Tibial artery (tissue), 4 donors: ENCODE measurements at regions of chr16 and their contacts with region 1.

Region 1: DNA sequence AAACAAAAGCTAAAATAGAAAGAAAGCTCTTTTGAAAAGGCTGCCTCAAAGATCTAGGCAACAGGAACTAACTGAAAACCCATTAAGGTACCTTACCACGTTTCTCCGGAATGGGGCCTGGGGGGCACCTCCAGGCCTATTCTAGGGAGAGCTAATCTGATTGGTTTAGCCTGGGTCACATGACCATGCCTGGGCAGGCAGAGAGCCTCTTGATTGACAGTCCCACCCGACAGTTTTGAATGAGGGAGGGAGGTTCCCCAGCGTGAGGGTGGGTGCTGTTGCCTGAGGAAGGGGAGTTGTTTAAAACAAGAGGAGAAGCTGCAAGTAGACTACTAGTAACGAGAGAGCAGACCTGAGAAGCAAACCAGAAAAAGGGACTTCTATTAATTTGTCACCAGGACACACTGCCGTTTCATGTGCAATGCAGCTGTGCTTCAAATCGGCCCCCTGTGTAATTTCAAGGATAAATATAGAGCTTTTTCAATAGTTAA is 143.4 kb upstream of the HS3ST2 start:
- DNase-seq: peak in 1 of 2 donors; percentile 56
- H3K4me3 ChIP-seq: no peak overlapping the region
- H3K27ac ChIP-seq: no peak overlapping the region
- H3K4me1 ChIP-seq: peaks cover 0 to 14% (median 0%) of the 10 kb centered on the region in 4 donors
- H3K27me3 ChIP-seq: peaks cover 0 to 3% of the 10 kb centered on the region in 2 donors
- CTCF ChIP-seq: no peak

Region 2: GRCh38 chr16:20900299-20901067 is 1770.1 kb before region 1 on chr16 and contains the starts of genes DCUN1D3 and LYRM1:
- intact Hi-C with region 1: loop called (anchors 10 kb)
- DNase-seq: peak; percentile 99
- H3K4me3 ChIP-seq: peak within 1 kb of the TSS; percentile 63 to 78
- H3K27ac ChIP-seq: peak within 1 kb of the TSS; percentile 96 to 98
- H3K4me1 ChIP-seq: peaks cover 0 to 79% (median 62%) of the 10 kb centered on the region in 4 donors
- H3K27me3 ChIP-seq: no peaks in the 10 kb centered on the region
- CTCF ChIP-seq: peak in 1 of 2 experiments; percentile 4

Region 3: GRCh38 chr16:21158208-21159110 is 1512.1 kb before region 1 on chr16 and contains the start of gene LDAF1:
- intact Hi-C with region 1: loop called (anchors 10 kb)
- DNase-seq: peak; percentile 88 to 94
- H3K4me3 ChIP-seq: peak within 1 kb of the TSS; percentile 75 to 91
- H3K27ac ChIP-seq: peak within 1 kb of the TSS; percentile 86 to 92
- H3K4me1 ChIP-seq: peaks cover 0 to 54% (median 40%) of the 10 kb centered on the region in 4 donors
- H3K27me3 ChIP-seq: no peaks in the 10 kb centered on the region
- CTCF ChIP-seq: no peak

Region 4: GRCh38 chr16:23060458-23061320 is 390.1 kb after region 1 on chr16:
- intact Hi-C with region 1: loop called (anchors 10 kb)
- DNase-seq: peak; percentile 79 to 80
- H3K4me3 ChIP-seq: no peak overlapping the region
- H3K27ac ChIP-seq: no peak overlapping the region
- H3K4me1 ChIP-seq: no peaks in the 10 kb centered on the region
- H3K27me3 ChIP-seq: peaks cover 0 to 10% of the 10 kb centered on the region in 2 donors
- CTCF ChIP-seq: peak; percentile 57 to 81